MCF 10A (cell line): ENCODE measurements at regions of chr6 and their contacts with region 1.

Region 1: DNA sequence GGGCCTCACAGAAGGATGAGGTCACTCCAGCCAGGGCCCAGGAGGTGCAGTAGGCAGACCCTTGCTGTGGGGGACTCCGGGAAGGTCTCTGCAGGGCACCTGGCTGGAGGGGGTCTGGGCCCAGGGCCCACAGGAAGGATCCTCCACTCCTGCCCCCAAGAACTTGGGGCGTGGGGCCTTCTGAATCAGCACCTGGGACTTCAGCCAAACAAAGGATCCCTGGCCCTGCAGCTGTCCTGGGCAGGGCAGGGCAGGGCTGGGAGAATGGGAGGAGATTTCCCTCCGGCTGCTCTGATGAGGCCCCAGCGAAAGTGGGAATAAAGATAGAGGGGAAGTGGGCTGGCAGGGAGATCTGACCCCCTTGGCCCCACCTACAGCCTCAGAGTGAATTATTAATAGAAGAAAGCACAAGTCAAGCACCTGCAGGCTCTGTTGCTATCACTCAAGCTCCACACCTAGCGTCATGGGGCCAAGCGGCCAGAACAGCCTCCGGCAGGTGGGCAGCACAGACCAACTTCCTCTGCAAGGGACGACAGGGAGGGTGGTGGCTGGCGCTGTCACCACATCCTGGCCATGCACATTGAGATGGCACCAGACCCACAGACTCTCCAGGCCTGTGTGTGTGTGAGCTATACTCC is 61.6 kb upstream of the MRPS10 start:
- DNase-seq: peak; percentile 90
- H3K4me3 Mint-ChIP-seq: peak overlapping the region; percentile 52
- H3K27ac Mint-ChIP-seq: peak overlapping the region; percentile 70
- H3K4me1 Mint-ChIP-seq: peaks cover 34% of the 10 kb centered on the region
- H3K27me3 Mint-ChIP-seq: no peaks in the 10 kb centered on the region
- CTCF ChIP-seq: no peak

Region 2: DNA sequence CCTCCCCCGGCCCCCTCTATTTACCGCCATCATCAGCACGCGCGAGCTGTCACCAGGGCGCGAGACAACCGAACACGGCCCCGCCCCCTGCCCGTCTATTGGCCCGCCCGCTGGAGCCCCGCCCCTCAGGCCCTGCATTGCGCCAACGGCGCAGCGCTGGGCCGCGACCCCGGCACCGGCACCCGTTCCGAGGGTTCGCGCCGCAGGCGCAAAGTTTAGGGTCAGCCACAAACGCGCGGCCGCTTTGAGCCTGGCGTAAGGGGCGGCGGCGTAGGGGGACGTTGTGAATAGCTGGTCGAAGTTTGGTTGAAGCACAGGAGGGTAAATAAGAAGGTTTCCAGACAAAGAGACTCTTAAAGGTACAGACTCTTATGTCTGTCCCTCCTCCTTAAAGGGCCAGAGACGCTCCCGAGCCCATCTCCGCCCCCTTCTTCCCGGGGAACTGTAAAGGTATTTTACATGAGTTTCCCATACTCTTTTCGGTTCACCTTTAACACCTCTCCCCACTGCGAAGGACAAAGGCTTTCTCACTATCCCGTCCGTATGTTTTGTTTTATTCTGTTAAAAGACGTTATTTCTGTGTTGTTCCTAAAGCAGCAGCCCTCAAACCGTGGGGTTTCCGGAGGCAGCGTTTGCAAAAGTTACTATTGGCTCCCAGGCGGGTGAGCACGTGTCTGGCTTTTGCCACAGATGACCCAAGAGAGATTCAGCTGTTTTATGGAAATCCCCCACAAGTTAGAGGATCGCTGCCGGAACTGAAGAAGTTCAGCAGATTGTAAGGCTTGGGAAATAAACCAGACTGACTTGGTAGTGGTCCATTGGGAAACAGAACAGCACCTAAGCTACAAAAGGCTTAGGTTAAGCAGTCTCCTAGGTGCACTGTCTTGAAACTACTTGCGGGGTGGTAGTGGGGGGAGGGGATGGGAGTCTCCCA is 383.7 kb before region 1 on chr6 and contains the start of gene USP49:
- CTCF ChIA-PET with region 1: no interaction called
- POLR2A ChIA-PET with region 1: no interaction called
- intact Hi-C with region 1: no loop called
- DNase-seq: peak; percentile 77
- H3K4me3 Mint-ChIP-seq: no peak within 1 kb of the TSS
- H3K27ac Mint-ChIP-seq: no peak within 1 kb of the TSS
- H3K4me1 Mint-ChIP-seq: peaks cover 9% of the 10 kb centered on the region
- H3K27me3 Mint-ChIP-seq: no peaks in the 10 kb centered on the region
- CTCF ChIP-seq: no peak
- total RNA-seq, gene USP49: 4.1 and 4.3 TPM in 2 replicates

Region 3: GRCh38 chr6:42210551-42210950 is 68.7 kb before region 1 on chr6:
- CTCF ChIA-PET with region 1: no interaction called
- POLR2A ChIA-PET with region 1: no interaction called
- intact Hi-C with region 1: no loop called
- DNase-seq: peak; percentile 43
- H3K4me3 Mint-ChIP-seq: no peak overlapping the region
- H3K27ac Mint-ChIP-seq: peak overlapping the region; percentile 63
- H3K4me1 Mint-ChIP-seq: no peaks in the 10 kb centered on the region
- H3K27me3 Mint-ChIP-seq: no peaks in the 10 kb centered on the region
- CTCF ChIP-seq: no peak

Region 4: GRCh38 chr6:42294759-42295158 is 15.5 kb after region 1 on chr6:
- CTCF ChIA-PET with region 1: interaction called, 3 read pairs
- POLR2A ChIA-PET with region 1: interaction called, 11 read pairs
- intact Hi-C with region 1: no loop called
- DNase-seq: peak; percentile 96
- H3K4me3 Mint-ChIP-seq: peak overlapping the region; percentile 15
- H3K27ac Mint-ChIP-seq: peak overlapping the region; percentile 93
- H3K4me1 Mint-ChIP-seq: peaks cover 38% of the 10 kb centered on the region
- H3K27me3 Mint-ChIP-seq: no peaks in the 10 kb centered on the region
- CTCF ChIP-seq: no peak

Region 5: GRCh38 chr6:42417641-42418112 is 138.4 kb after region 1 on chr6:
- CTCF ChIA-PET with region 1: no interaction called
- POLR2A ChIA-PET with region 1: no interaction called
- intact Hi-C with region 1: no loop called
- DNase-seq: no peak
- H3K4me3 Mint-ChIP-seq: no peak overlapping the region
- H3K27ac Mint-ChIP-seq: no peak overlapping the region
- H3K4me1 Mint-ChIP-seq: peaks cover 5% of the 10 kb centered on the region
- H3K27me3 Mint-ChIP-seq: no peaks in the 10 kb centered on the region
- CTCF ChIP-seq: no peak